Activated CD4-positive, alpha-beta T cell treated with anti-CD3 and anti-CD28 coated beads, Interleukin-2, amount 10 ng/mL, durations not matched to agents 24 days and 14 days (primary cell): ENCODE measurements at regions of chr4 and their contacts with region 1.

Region 1: DNA sequence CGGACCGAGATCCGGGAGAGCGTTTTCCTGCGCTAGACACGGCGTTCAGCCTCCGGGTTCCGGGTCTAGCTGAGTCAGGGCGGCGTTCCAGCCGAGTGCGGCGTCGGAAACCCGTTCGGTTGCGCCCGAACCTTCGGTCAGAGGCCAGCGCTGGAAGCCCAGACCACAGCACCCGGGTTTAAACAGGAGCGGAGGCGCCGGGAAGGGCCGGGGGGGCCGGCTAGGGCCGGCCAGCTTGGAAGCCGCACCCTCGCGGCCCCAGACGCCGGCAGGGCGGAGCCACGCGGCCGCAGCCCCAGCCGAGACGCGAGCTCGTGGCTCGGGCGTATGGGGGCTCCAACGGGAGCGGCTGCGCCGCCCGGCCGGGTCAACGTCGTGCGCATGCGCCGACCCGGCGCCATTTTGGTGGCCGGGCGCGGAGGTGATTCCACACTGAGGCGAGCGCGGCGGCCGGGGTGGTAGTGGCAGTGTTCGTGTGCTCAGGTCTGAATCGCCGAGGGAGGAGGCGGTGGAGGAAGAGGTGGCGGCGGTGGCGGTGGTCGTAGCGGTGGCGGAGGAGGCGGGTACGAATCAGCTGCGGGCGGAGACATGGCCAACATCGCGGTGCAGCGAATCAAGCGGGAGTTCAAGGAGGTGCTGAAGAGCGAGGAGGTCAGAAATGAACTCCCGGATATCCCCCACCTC is at the start of gene UBE2K:
- DNase-seq: peak; percentile 98
- H3K4me3 Mint-ChIP-seq: peak within 1 kb of the TSS; percentile 99
- H3K27ac Mint-ChIP-seq: peak within 1 kb of the TSS; percentile 99
- H3K4me1 Mint-ChIP-seq: peaks cover 24% of the 10 kb centered on the region
- H3K27me3 Mint-ChIP-seq: no peaks in the 10 kb centered on the region
- total RNA-seq, gene UBE2K: 99.4 and 106 TPM in 2 replicates

Region 2: DNA sequence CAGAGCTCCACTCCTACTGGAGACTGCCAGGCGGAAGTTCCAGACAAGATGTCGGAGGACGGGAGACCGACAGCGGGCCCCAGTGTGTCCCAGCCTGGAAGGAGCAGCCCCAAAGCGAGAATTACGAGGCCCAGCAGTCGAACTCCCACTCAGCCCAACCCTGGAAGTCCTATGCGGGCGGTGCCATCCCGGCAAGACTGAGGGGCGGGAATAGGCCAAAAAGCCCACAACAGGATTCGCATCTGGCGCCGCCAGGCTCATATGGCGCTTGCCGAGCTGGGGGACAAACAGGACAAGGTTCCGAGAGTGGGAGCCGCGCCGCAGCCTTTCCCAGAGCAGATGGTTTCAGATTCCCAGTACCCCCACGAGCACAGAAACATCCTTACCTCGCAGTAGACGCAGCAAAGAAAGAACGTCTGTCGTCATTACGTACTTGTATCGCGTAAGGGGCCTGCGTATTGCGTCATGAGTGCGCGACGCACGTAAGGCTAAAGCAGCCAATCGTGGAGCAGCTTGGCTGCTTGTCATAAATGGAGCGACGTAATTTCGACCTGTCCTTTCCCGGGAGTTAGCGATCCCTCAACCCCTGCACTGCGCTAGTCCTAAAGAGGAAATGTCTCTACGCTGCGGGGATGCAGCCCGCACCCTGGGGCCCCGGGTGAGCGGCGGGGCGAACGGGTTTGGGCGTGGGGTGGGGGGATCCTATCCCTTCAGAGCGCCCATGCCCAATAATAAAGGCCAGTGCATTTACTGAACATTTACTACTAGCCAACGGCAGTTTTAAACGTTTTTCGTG is 239.2 kb before region 1 on chr4 and contains the starts of genes LIAS and RPL9:
- intact Hi-C with region 1: loop called (anchors 2 kb)
- DNase-seq: peak; percentile 98
- H3K4me3 Mint-ChIP-seq: peak within 1 kb of the TSS; percentile 89
- H3K27ac Mint-ChIP-seq: peak within 1 kb of the TSS; percentile 98
- H3K4me1 Mint-ChIP-seq: peaks cover 35% of the 10 kb centered on the region
- H3K27me3 Mint-ChIP-seq: peaks cover 2% of the 10 kb centered on the region
- total RNA-seq, gene LIAS: 27.7 and 29.2 TPM in 2 replicates
- total RNA-seq, gene RPL9: 1,785 and 1,789 TPM in 2 replicates

Region 3: DNA sequence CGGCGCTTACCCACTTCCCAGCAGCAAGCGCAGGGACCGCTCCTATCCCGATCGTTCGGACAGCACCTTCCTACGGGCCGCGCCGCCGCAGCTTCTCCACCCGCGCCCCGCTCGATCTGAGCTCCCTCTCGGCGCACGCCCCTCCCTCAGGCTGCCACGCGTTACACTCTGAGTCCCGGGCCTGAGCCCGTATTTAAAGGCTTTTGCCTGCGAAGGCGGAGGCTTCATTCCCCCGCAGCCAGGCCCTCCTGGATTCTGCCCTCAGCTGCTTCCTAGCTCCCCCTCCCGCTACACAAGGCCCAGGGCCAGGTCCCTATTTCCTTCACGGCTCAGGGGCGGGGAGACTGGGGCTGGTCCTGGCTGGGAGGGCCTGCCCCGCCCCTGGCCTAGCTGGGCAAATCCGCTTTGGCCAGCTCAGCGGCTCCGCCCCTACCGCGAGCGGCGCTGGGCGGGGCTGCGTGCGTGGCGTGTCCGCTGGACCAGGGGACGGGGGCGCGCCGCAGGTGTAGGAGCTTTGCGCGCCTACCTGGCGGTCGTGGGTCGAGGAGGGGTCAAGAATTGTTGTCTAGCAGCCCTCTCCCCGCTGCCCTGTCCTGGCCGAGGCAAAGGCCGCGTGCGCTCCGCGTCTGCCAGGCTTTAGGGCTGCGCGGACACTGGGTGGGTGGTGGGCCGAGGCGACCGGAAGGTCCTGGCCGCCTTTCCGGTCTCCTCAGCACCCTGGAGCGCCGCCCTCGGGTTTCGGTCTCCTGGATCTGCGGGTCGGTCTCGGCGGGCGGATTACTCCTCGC is 170.4 kb before region 1 on chr4 and contains the start of gene UGDH:
- intact Hi-C with region 1: loop called (anchors 2 kb)
- DNase-seq: peak; percentile 99
- H3K4me3 Mint-ChIP-seq: peak within 1 kb of the TSS; percentile 98
- H3K27ac Mint-ChIP-seq: peak within 1 kb of the TSS; percentile 95
- H3K4me1 Mint-ChIP-seq: peaks cover 20% of the 10 kb centered on the region
- H3K27me3 Mint-ChIP-seq: no peaks in the 10 kb centered on the region
- total RNA-seq, gene UGDH: 23.1 and 29.2 TPM in 2 replicates

Region 4: GRCh38 chr4:39638354-39639240 is 59.3 kb before region 1 on chr4 and contains the start of gene SMIM14:
- intact Hi-C with region 1: loop called (anchors 2 kb)
- DNase-seq: peak; percentile 97
- H3K4me3 Mint-ChIP-seq: peak within 1 kb of the TSS; percentile 90
- H3K27ac Mint-ChIP-seq: peak within 1 kb of the TSS; percentile 69
- H3K4me1 Mint-ChIP-seq: peaks cover 31% of the 10 kb centered on the region
- H3K27me3 Mint-ChIP-seq: peaks cover 31% of the 10 kb centered on the region
- total RNA-seq, gene SMIM14: 1.0 and 2.0 TPM in 2 replicates

Region 5: GRCh38 chr4:39814403-39815185 is 116.7 kb after region 1 on chr4:
- intact Hi-C with region 1: loop called (anchors 5 kb)
- DNase-seq: peak; percentile 64
- H3K4me3 Mint-ChIP-seq: peak overlapping the region; percentile 26
- H3K27ac Mint-ChIP-seq: peak overlapping the region; percentile 90
- H3K4me1 Mint-ChIP-seq: peaks cover 16% of the 10 kb centered on the region
- H3K27me3 Mint-ChIP-seq: peaks cover 7% of the 10 kb centered on the region

Region 6: GRCh38 chr4:39913471-39913870 is 215.6 kb after region 1 on chr4:
- intact Hi-C with region 1: no loop called
- DNase-seq: no peak
- H3K4me3 Mint-ChIP-seq: no peak overlapping the region
- H3K27ac Mint-ChIP-seq: no peak overlapping the region
- H3K4me1 Mint-ChIP-seq: no peaks in the 10 kb centered on the region
- H3K27me3 Mint-ChIP-seq: no peaks in the 10 kb centered on the region

Region 7: DNA sequence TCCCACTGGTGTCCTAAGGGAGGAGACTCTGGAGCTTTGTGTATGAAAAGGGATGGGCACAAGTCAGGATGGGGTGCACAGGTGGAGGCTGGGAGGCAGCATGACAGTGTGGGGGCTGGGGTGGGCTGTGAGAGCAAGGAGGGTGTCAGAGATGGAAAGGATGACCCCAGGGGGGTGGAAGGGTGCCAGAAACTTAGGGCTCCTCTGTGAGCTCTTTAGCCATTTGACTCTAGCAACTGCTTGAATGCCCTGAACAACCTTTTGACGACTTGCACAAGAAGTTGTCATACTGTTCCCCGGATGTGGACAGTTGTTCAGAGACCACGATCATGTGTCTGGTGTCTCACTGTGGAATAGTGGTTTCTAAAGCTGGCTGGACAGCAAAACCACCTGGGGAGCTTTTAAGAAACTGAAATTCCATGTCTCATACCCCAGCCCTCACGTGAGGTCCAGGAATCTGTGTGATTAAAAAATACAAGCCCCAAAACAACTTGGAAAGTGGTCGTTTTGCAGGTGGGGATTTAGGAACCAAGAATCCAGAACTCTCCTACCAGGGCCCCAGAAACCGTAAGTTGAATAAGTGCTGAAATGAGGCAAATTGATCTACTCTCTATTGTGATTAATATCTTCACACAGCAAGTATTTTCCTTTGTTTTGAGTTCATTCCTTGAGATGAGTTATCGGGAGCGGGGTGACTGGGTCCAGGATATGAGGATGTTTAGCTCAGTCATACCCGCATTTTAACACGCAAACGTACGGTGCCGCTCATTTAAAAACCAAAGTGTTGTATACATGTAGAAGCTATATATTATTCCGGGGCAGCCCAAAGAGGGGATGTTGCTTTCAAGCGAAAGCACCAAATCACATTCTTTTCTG is 502.4 kb after region 1 on chr4:
- intact Hi-C with region 1: loop called (anchors 10 kb)
- DNase-seq: peak; percentile 93
- H3K4me3 Mint-ChIP-seq: peak overlapping the region; percentile 93
- H3K27ac Mint-ChIP-seq: peak overlapping the region; percentile 94
- H3K4me1 Mint-ChIP-seq: peaks cover 44% of the 10 kb centered on the region
- H3K27me3 Mint-ChIP-seq: no peaks in the 10 kb centered on the region

Region 8: GRCh38 chr4:40325189-40326019 is 627.5 kb after region 1 on chr4:
- intact Hi-C with region 1: loop called (anchors 5 kb)
- DNase-seq: peak; percentile 90
- H3K4me3 Mint-ChIP-seq: no peak overlapping the region
- H3K27ac Mint-ChIP-seq: no peak overlapping the region
- H3K4me1 Mint-ChIP-seq: peaks cover 31% of the 10 kb centered on the region
- H3K27me3 Mint-ChIP-seq: no peaks in the 10 kb centered on the region

Region 9: GRCh38 chr4:40536032-40536431 is 838.1 kb after region 1 on chr4:
- intact Hi-C with region 1: no loop called
- DNase-seq: no peak
- H3K4me3 Mint-ChIP-seq: no peak overlapping the region
- H3K27ac Mint-ChIP-seq: no peak overlapping the region
- H3K4me1 Mint-ChIP-seq: peaks cover 5% of the 10 kb centered on the region
- H3K27me3 Mint-ChIP-seq: no peaks in the 10 kb centered on the region